CD8-positive, alpha-beta memory T cell (primary cell): ENCODE measurements at regions of chr9 and their contacts with region 1.

Region 1: GRCh38 chr9:21104787-21105186 is 27.0 kb upstream of the IFNB1 start:
- DNase-seq: no peak
- H3K4me3 ChIP-seq: no peak overlapping the region
- H3K4me3 Mint-ChIP-seq: no peak overlapping the region
- H3K27ac ChIP-seq: no peak overlapping the region
- H3K27ac Mint-ChIP-seq: no peak overlapping the region
- H3K4me1 ChIP-seq: no peaks in the 10 kb centered on the region
- H3K4me1 Mint-ChIP-seq: peaks cover 7 to 10% (median 9%) of the 10 kb centered on the region in 3 donors
- H3K27me3 ChIP-seq: no peaks in the 10 kb centered on the region
- H3K27me3 Mint-ChIP-seq: peaks cover 0 to 5% of the 10 kb centered on the region in 2 donors

Region 2: GRCh38 chr9:21078717-21079116 is 26.1 kb before region 1 on chr9:
- CTCF ChIA-PET with region 1: interaction called, 33 read pairs
- POLR2A ChIA-PET with region 1: no interaction called
- DNase-seq: no peak
- H3K4me3 ChIP-seq: no peak overlapping the region
- H3K4me3 Mint-ChIP-seq: no peak overlapping the region
- H3K27ac ChIP-seq: no peak overlapping the region
- H3K27ac Mint-ChIP-seq: peak overlapping the region in 3 of 8 donors; percentile 12 to 74 (median 16)
- H3K4me1 ChIP-seq: peaks cover 15% of the 10 kb centered on the region
- H3K4me1 Mint-ChIP-seq: peaks cover 21 to 31% (median 29%) of the 10 kb centered on the region in 3 donors
- H3K27me3 ChIP-seq: no peaks in the 10 kb centered on the region
- H3K27me3 Mint-ChIP-seq: peaks cover 0 to 3% of the 10 kb centered on the region in 2 donors

Region 3: GRCh38 chr9:21135504-21136135 is 30.8 kb after region 1 on chr9:
- CTCF ChIA-PET with region 1: no interaction called
- POLR2A ChIA-PET with region 1: no interaction called
- DNase-seq: no peak
- H3K4me3 ChIP-seq: no peak overlapping the region
- H3K4me3 Mint-ChIP-seq: no peak overlapping the region
- H3K27ac ChIP-seq: no peak overlapping the region
- H3K27ac Mint-ChIP-seq: no peak overlapping the region
- H3K4me1 ChIP-seq: no peaks in the 10 kb centered on the region
- H3K4me1 Mint-ChIP-seq: no peaks in the 10 kb centered on the region
- H3K27me3 ChIP-seq: no peaks in the 10 kb centered on the region
- H3K27me3 Mint-ChIP-seq: peaks cover 0 to 4% of the 10 kb centered on the region in 2 donors